ENCODE measurements at regions of chr1 and their contacts with region 1.

Region 1: GRCh38 chr1:9181176-9181906 is 52.4 kb upstream of the GPR157 start:
- DNase-seq: peak; percentile 86
- H3K4me3 ChIP-seq: peak overlapping the region; percentile 75 to 87
- H3K27ac ChIP-seq: peak overlapping the region; percentile 77 to 89
- H3K4me1 ChIP-seq: peaks cover 0 to 32% of the 10 kb centered on the region in 2 experiments; a peak in 1 of 4 replicates
- H3K27me3 ChIP-seq: no peaks in the 10 kb centered on the region
- CTCF ChIP-seq: peak; percentile 92
- EP300 ChIP-seq: no peak
- RAD21 ChIP-seq: peak; percentile 31; the same call in 1 of the 2 replicates

Region 2: GRCh38 chr1:8925406-8925805 is 255.9 kb before region 1 on chr1:
- CTCF ChIA-PET with region 1: no interaction called
- POLR2A ChIA-PET with region 1: no interaction called
- DNase-seq: no peak
- H3K4me3 ChIP-seq: no peak overlapping the region
- H3K27ac ChIP-seq: no peak overlapping the region
- H3K4me1 ChIP-seq: no peaks in the 10 kb centered on the region
- H3K27me3 ChIP-seq: no peaks in the 10 kb centered on the region
- CTCF ChIP-seq: no peak
- EP300 ChIP-seq: no peak
- RAD21 ChIP-seq: no peak

Region 3: GRCh38 chr1:9169601-9170137 is 11.7 kb before region 1 on chr1:
- CTCF ChIA-PET with region 1: interaction called, 15 read pairs
- POLR2A ChIA-PET with region 1: no interaction called
- DNase-seq: no peak
- H3K4me3 ChIP-seq: no peak overlapping the region
- H3K27ac ChIP-seq: no peak overlapping the region
- H3K4me1 ChIP-seq: peaks cover 1 to 2% of the 10 kb centered on the region in 2 experiments; a peak in 2 of 4 replicates
- H3K27me3 ChIP-seq: no peaks in the 10 kb centered on the region
- CTCF ChIP-seq: no peak
- EP300 ChIP-seq: no peak
- RAD21 ChIP-seq: no peak